H1 (cell line): ENCODE measurements at regions of chr18 and their contacts with region 1.

Region 1: GRCh38 chr18:12336171-12336613 is 28.2 kb downstream of the TUBB6 start:
- DNase-seq: peak; percentile 63 to 74
- H3K4me3 ChIP-seq: peak overlapping the region in 2 of 4 experiments; percentile 8 to 43; a peak in 2 of 8 replicates
- H3K27ac ChIP-seq: peak overlapping the region; percentile 79
- H3K4me1 ChIP-seq: peaks cover 15 to 41% (median 39%) of the 10 kb centered on the region in 4 experiments
- H3K27me3 ChIP-seq: no peaks in the 10 kb centered on the region
- CTCF ChIP-seq: no peak
- EP300 ChIP-seq: peak in 1 of 2 experiments; percentile 80; a peak in 1 of 3 replicates
- POLR2A ChIP-seq: 0 out of 3 replicates have a peak, but pooled peaks of 1 of the 2 experiments have one; percentile 7
- RAD21 ChIP-seq: no peak

Region 2: GRCh38 chr18:12317664-12318333 is 18.4 kb before region 1 on chr18:
- CTCF ChIA-PET with region 1: interaction called, 96 read pairs
- POLR2A ChIA-PET with region 1: interaction called, 13 read pairs
- DNase-seq: no peak
- H3K4me3 ChIP-seq: no peak overlapping the region
- H3K27ac ChIP-seq: no peak overlapping the region
- H3K4me1 ChIP-seq: no peaks in the 10 kb centered on the region
- H3K27me3 ChIP-seq: no peaks in the 10 kb centered on the region
- CTCF ChIP-seq: no peak
- EP300 ChIP-seq: no peak
- POLR2A ChIP-seq: no peak
- RAD21 ChIP-seq: no peak